SK-N-SH (cell line): ENCODE measurements at regions of chr10 and their contacts with region 1.

Region 1: GRCh38 chr10:72048450-72049124 is 39.8 kb downstream of the SPOCK2 start:
- DNase-seq: peak; percentile 88
- H3K4me3 ChIP-seq: peak overlapping the region in 1 of 2 experiments; percentile 46; a peak in 1 of 4 replicates
- H3K27ac ChIP-seq: no peak overlapping the region
- H3K4me1 ChIP-seq: peaks cover 0 to 7% of the 10 kb centered on the region in 2 experiments; a peak in 1 of 4 replicates
- H3K27me3 ChIP-seq: no peaks in the 10 kb centered on the region
- CTCF ChIP-seq: peak; percentile 100
- EP300 ChIP-seq: peak in 1 of 2 experiments; percentile 31; a peak in 1 of 4 replicates
- RAD21 ChIP-seq: peak; percentile 100

Region 2: DNA sequence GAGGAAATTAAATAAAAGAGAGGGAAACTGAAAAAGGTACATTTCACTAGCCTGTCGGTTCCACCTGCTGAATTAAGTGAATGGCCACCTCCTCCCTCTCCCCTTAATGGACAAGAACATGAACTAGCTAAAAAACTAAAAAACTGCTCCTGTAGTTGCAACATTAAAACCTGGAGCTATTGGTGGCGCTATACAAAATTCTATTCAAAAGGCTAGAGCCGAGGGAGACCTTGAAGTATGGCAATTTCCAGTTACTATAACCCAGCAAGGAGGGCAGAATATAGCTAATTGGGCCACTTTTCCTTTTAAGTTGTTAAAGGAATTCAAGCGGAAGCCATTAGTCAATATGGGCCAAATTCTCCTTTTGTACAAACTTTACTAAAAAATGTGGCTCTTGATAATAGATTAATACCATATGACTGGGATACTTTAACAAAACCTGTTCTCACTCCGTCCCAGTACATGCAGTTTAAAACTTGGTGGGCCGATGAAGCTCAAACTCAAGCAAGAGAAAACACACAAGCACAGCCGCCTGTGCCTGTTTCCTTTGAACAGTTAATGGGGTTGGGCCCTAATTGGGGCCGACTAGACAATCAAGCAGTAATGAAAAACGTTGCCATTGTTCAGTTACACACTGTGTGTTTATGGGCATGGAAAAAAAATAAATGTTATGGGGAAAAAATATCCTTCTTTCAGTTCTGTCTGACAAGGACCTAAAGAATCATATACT is 90.9 kb before region 1 on chr10:
- CTCF ChIA-PET with region 1: interaction called, 110 read pairs
- POLR2A ChIA-PET with region 1: interaction called, 3 read pairs
- DNase-seq: no peak
- H3K4me3 ChIP-seq: no peak overlapping the region
- H3K27ac ChIP-seq: no peak overlapping the region
- H3K4me1 ChIP-seq: no peaks in the 10 kb centered on the region
- H3K27me3 ChIP-seq: no peaks in the 10 kb centered on the region
- CTCF ChIP-seq: peak; percentile 20; the same call in 1 of the 2 replicates
- EP300 ChIP-seq: no peak
- RAD21 ChIP-seq: 0 out of 2 replicates have a peak, but pooled peaks have one; percentile 4

Region 3: GRCh38 chr10:71999360-72000072 is 49.1 kb before region 1 on chr10:
- CTCF ChIA-PET with region 1: interaction called, 22 read pairs
- POLR2A ChIA-PET with region 1: interaction called, 3 read pairs
- DNase-seq: peak; percentile 91
- H3K4me3 ChIP-seq: no peak overlapping the region
- H3K27ac ChIP-seq: peak overlapping the region; percentile 80 to 90
- H3K4me1 ChIP-seq: peaks cover 19 to 38% of the 10 kb centered on the region in 2 experiments
- H3K27me3 ChIP-seq: no peaks in the 10 kb centered on the region
- CTCF ChIP-seq: no peak
- EP300 ChIP-seq: peak in 1 of 2 experiments; percentile 81; a peak in 2 of 4 replicates
- RAD21 ChIP-seq: no peak

Region 4: GRCh38 chr10:72061491-72061890 is 12.9 kb after region 1 on chr10:
- CTCF ChIA-PET with region 1: interaction called, 55 read pairs
- POLR2A ChIA-PET with region 1: no interaction called
- DNase-seq: peak; percentile 56
- H3K4me3 ChIP-seq: no peak overlapping the region
- H3K27ac ChIP-seq: no peak overlapping the region
- H3K4me1 ChIP-seq: peaks cover 0 to 4% of the 10 kb centered on the region in 2 experiments; a peak in 1 of 4 replicates
- H3K27me3 ChIP-seq: no peaks in the 10 kb centered on the region
- CTCF ChIP-seq: no peak; the same call in 1 of the 2 replicates
- EP300 ChIP-seq: no peak
- RAD21 ChIP-seq: no peak

Region 5: GRCh38 chr10:72229261-72230251 is 181.0 kb after region 1 on chr10:
- CTCF ChIA-PET with region 1: interaction called, 37 read pairs
- POLR2A ChIA-PET with region 1: no interaction called
- DNase-seq: no peak
- H3K4me3 ChIP-seq: no peak overlapping the region
- H3K27ac ChIP-seq: no peak overlapping the region
- H3K4me1 ChIP-seq: peaks cover 0 to 12% of the 10 kb centered on the region in 2 experiments; a peak in 2 of 4 replicates
- H3K27me3 ChIP-seq: no peaks in the 10 kb centered on the region
- CTCF ChIP-seq: no peak
- EP300 ChIP-seq: no peak
- RAD21 ChIP-seq: no peak